B cell (primary cell): ENCODE measurements at regions of chr6 and their contacts with region 1.

Region 1: GRCh38 chr6:33788694-33789549 is at the start of gene LEMD2:
- DNase-seq: peak; percentile 95
- ATAC-seq: peak; percentile 92
- H3K4me3 ChIP-seq: peak within 1 kb of the TSS; percentile 11 to 89 (median 73)
- H3K4me3 Mint-ChIP-seq: peak within 1 kb of the TSS; percentile 93
- H3K27ac ChIP-seq: peak within 1 kb of the TSS; percentile 78 to 89
- H3K27ac Mint-ChIP-seq: peak within 1 kb of the TSS; percentile 97
- H3K4me1 ChIP-seq: peaks cover 34 to 37% of the 10 kb centered on the region in 2 donors
- H3K4me1 Mint-ChIP-seq: peaks cover 47% of the 10 kb centered on the region
- H3K27me3 ChIP-seq: peaks cover 0 to 5% (median 0%) of the 10 kb centered on the region in 4 experiments
- H3K27me3 Mint-ChIP-seq: peaks cover 4% of the 10 kb centered on the region
- CTCF ChIP-seq: no peak
- total RNA-seq, gene LEMD2: 113 and 122 TPM in 2 replicates

Region 2: DNA sequence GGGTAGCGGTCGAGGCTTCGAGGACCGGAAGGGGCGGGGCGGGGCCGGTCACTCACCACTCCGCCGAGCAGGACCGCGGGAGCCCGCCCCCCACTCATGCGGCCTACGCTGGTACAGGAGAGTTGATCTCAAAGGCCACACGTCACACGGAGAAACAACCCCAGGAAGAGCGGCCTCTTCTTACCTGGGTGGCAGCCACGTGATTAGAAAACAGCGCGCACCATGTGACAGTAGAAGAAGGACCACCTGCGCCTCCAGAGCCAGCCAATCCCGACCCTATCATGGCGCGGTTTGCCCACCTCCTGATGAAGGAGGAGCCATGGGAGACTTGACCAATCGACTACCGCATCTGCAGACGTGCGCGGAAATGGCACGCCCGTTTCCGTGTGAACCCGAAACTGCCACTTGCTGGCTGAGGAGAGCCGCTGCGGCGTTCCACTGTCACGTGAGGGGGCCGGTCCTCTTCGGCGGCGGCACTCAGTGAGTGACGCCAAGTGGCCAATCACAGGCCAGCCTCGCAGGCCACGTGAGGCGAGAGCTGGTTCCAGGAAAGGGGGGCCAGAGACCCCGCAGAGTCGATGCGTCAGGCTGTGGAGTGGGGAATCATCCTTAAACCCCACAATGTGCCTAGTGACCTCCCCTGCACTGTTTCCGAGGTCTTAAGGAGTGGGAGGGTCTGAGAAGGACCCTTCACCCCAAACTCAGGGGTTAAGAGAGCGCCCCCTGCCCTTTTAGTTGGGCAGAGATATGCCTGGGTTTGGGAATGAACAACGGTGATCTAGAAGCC is 370.8 kb before region 1 on chr6 and contains the start of gene CUTA:
- CTCF ChIA-PET with region 1: no interaction called
- POLR2A ChIA-PET with region 1: no interaction called
- intact Hi-C with region 1: loop called (anchors 2 kb)
- DNase-seq: peak; percentile 100
- ATAC-seq: peak; percentile 89
- H3K4me3 ChIP-seq: peak within 1 kb of the TSS; percentile 58 to 84 (median 69)
- H3K4me3 Mint-ChIP-seq: peak within 1 kb of the TSS; percentile 96
- H3K27ac ChIP-seq: peak within 1 kb of the TSS; percentile 89 to 93
- H3K27ac Mint-ChIP-seq: peak within 1 kb of the TSS; percentile 97
- H3K4me1 ChIP-seq: peaks cover 40 to 65% of the 10 kb centered on the region in 2 donors
- H3K4me1 Mint-ChIP-seq: peaks cover 63% of the 10 kb centered on the region
- H3K27me3 ChIP-seq: peaks cover 0 to 3% (median 0%) of the 10 kb centered on the region in 4 experiments
- H3K27me3 Mint-ChIP-seq: peaks cover 4% of the 10 kb centered on the region
- CTCF ChIP-seq: peak; percentile 28
- total RNA-seq, gene CUTA: 134 and 137 TPM in 2 replicates

Region 3: DNA sequence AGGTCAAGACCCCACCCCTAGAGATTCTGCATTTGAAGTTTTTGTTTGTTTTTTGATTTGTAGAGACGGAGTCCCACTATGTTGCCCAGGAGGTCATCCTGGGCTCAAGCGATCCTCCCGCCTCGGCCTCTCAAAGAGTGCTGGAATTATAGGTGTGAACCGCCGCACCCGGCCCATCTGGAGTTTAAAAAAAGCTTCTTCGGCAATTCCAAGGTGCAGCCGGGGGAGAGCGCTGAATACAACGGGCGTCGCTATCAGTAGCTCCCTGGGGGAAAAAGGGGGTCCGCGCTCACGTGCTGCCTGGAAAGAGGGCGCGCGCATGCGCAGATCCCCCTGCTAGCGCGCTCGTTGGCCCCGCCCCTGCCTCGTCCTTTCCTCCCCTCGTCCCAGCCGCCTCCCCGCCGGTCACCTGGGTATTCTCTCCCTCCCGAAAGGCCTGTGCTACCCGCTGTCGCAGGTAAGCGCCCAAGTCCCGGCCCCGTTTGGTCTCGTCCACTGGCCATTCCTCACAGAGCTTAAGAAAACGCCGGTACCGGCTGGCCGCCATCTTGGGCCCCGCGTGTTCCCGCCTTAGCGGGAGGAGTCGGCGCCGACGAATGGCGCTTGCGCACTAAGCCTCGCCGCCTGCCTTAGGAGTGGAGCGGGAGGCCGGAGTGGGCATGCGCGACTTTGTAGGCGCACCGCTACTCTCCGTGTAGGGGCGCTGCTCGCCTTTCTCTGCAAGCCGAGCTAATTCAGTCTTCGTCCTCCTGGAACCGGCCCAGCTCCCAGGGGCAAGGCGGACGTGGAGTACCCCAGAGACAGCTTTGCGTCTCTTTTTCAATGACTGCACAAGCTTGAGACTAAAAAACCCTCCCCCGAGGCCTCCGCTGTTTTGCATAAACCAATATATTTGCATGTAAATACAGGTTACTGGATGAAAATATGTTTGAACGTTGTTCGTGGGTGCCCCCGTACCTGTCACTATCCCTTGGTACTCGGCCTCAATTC is 77.5 kb before region 1 on chr6 and contains the start of gene UQCC2:
- CTCF ChIA-PET with region 1: no interaction called
- POLR2A ChIA-PET with region 1: interaction called, 4 read pairs
- intact Hi-C with region 1: loop called (anchors 1 kb)
- DNase-seq: peak; percentile 99
- ATAC-seq: peak; percentile 87
- H3K4me3 ChIP-seq: peak within 1 kb of the TSS; percentile 62 to 96 (median 93)
- H3K4me3 Mint-ChIP-seq: peak within 1 kb of the TSS; percentile 87
- H3K27ac ChIP-seq: peak within 1 kb of the TSS; percentile 83 to 88
- H3K27ac Mint-ChIP-seq: peak within 1 kb of the TSS; percentile 93
- H3K4me1 ChIP-seq: peaks cover 16 to 28% of the 10 kb centered on the region in 2 donors
- H3K4me1 Mint-ChIP-seq: peaks cover 33% of the 10 kb centered on the region
- H3K27me3 ChIP-seq: no peaks in the 10 kb centered on the region
- H3K27me3 Mint-ChIP-seq: no peaks in the 10 kb centered on the region
- CTCF ChIP-seq: peak; percentile 44
- total RNA-seq, gene UQCC2: 16.6 and 17.1 TPM in 2 replicates

Region 4: DNA sequence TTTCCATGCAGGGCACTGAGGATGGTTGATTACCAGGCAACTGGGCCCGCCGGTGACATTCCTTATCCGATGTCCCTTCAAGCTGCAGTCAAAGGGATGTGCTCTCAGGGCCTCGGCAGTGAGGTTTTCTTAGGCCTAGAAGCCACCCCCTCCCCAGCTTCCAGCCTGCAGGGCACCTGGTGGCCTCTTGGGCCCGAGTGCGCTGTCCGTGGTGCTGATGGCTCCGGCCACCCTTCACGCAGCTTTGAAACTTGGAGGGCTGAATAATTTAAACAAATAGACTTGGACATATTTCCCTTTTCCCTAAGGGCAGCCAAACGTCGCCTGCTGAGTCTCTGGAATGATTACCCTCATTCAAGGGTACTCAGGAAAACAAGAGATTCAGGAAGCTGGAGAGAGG is 23.7 kb after region 1 on chr6:
- CTCF ChIA-PET with region 1: no interaction called
- POLR2A ChIA-PET with region 1: no interaction called
- intact Hi-C with region 1: no loop called
- DNase-seq: peak; percentile 24
- ATAC-seq: no peak
- H3K4me3 ChIP-seq: no peak overlapping the region
- H3K4me3 Mint-ChIP-seq: no peak overlapping the region
- H3K27ac ChIP-seq: no peak overlapping the region
- H3K27ac Mint-ChIP-seq: no peak overlapping the region
- H3K4me1 ChIP-seq: peaks cover 5 to 6% of the 10 kb centered on the region in 2 donors
- H3K4me1 Mint-ChIP-seq: peaks cover 3% of the 10 kb centered on the region
- H3K27me3 ChIP-seq: peaks cover 0 to 58% (median 12%) of the 10 kb centered on the region in 4 experiments
- H3K27me3 Mint-ChIP-seq: peaks cover 63% of the 10 kb centered on the region
- CTCF ChIP-seq: no peak